ENCODE measurements at regions of chr1 and their contacts with region 1.

Region 1: GRCh38 chr1:165827268-165828102 is at the start of gene UCK2:
- DNase-seq: peak; percentile 89 to 92 (median 91)
- ATAC-seq: peak; percentile 88
- H3K4me3 ChIP-seq: peak within 1 kb of the TSS; percentile 78
- H3K27ac ChIP-seq: peak within 1 kb of the TSS; percentile 95
- H3K4me1 ChIP-seq: peaks cover 8 to 16% of the 10 kb centered on the region in 2 experiments
- H3K27me3 ChIP-seq: no peaks in the 10 kb centered on the region; a peak in 1 of 5 replicates
- CTCF ChIP-seq: peak; percentile 0 to 33 (median 26); a peak in 3 of 6 replicates
- EP300 ChIP-seq: no peak
- POLR2A ChIP-seq: peak; percentile 77
- RAD21 ChIP-seq: peak in 1 of 2 experiments; percentile 41
- polyA plus RNA-seq, gene UCK2: 84.6 to 86.7 TPM

Region 2: DNA sequence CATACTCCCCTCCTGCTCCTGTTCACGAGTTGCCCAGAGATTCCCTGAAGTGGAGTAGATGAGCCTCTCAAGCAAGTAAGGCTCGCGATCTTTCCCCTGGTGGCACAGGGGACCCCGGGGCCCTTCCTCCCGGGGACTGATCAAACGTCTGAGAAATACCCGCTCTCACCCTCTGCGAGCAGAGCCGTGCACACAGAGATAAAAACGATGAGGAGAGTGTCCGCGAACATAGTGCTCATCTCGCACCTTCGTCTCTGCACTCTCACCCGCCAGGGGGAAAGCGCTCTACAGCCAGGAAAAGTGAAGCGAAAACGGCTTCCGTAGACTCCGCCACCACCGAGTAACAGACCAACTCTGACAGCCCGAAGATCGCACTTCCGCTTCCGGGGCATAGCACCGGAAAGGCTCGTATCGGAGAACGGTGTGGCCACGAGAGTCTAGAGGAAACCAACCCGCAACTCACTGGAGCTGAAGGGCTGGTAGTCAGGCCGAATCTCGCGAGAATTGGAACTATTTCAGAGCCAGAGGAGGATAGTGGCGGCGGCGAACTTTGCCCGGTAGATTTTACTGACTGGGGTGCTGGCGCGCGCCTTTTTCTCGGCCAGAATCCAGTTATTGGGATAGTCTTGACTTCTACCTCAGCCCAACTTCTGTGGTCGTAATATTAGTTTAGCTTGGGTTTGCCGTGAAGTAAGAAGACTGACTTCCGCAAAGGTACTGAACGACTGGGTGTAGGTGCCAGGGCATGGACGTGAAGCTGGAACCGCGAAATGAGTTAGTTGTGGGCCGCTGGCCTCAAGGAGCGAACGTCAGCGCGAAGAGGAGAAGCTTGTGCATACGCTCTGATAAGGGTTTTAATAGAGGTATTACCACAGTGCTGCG is 58.7 kb before region 1 on chr1 and contains the start of gene TMCO1:
- CTCF ChIA-PET with region 1: interaction called, 5 read pairs
- POLR2A ChIA-PET with region 1: interaction called, 27 read pairs
- in situ Hi-C with region 1: no loop called
- intact Hi-C with region 1: loop called (anchors 2 kb)
- DNase-seq: peak; percentile 90 to 99 (median 95)
- ATAC-seq: peak; percentile 96
- H3K4me3 ChIP-seq: peak within 1 kb of the TSS; percentile 73
- H3K27ac ChIP-seq: peak within 1 kb of the TSS; percentile 96
- H3K4me1 ChIP-seq: peaks cover 21 to 44% of the 10 kb centered on the region in 2 experiments
- H3K27me3 ChIP-seq: no peaks in the 10 kb centered on the region
- CTCF ChIP-seq: peak; percentile 27 to 45 (median 35); a peak in 4 of 6 replicates
- EP300 ChIP-seq: peak; percentile 62
- POLR2A ChIP-seq: peak; percentile 98
- RAD21 ChIP-seq: peak in 1 of 2 experiments; percentile 24; a peak in 1 of 4 replicates
- polyA plus RNA-seq, gene TMCO1: 412 to 561 TPM

Region 3: DNA sequence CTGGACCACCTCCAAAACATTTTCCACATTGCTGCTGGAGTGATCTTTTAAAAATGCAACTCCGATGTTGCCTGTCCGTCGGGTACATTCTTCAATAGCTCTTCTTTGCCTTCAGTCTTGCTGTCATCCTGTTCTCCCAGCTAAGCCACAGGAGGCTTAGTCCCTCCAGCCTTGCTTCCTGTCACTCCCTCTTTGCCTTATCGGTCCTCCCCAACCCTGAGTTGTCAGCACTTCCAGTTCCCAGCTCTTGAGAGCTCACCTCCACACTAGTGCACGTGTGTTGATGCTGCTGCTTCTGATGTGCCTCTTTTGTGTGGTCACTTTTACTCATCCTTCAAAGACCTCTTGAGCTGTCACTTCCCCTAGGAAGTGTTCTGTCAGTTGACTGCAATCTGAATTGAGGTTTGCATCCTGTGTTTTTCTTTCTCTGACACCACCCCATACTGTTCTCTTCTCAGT is 15.2 kb after region 1 on chr1:
- CTCF ChIA-PET with region 1: no interaction called
- POLR2A ChIA-PET with region 1: interaction called, 41 read pairs
- in situ Hi-C with region 1: no loop called
- intact Hi-C with region 1: no loop called
- DNase-seq: peak; percentile 68 to 95 (median 78)
- ATAC-seq: peak; percentile 92
- H3K4me3 ChIP-seq: no peak overlapping the region
- H3K27ac ChIP-seq: peak overlapping the region; percentile 37
- H3K4me1 ChIP-seq: peaks cover 31 to 73% of the 10 kb centered on the region in 2 experiments
- H3K27me3 ChIP-seq: no peaks in the 10 kb centered on the region
- CTCF ChIP-seq: no peak
- EP300 ChIP-seq: peak; percentile 81
- POLR2A ChIP-seq: no peak
- RAD21 ChIP-seq: peak; percentile 13 to 32; a peak in 2 of 4 replicates

Region 4: DNA sequence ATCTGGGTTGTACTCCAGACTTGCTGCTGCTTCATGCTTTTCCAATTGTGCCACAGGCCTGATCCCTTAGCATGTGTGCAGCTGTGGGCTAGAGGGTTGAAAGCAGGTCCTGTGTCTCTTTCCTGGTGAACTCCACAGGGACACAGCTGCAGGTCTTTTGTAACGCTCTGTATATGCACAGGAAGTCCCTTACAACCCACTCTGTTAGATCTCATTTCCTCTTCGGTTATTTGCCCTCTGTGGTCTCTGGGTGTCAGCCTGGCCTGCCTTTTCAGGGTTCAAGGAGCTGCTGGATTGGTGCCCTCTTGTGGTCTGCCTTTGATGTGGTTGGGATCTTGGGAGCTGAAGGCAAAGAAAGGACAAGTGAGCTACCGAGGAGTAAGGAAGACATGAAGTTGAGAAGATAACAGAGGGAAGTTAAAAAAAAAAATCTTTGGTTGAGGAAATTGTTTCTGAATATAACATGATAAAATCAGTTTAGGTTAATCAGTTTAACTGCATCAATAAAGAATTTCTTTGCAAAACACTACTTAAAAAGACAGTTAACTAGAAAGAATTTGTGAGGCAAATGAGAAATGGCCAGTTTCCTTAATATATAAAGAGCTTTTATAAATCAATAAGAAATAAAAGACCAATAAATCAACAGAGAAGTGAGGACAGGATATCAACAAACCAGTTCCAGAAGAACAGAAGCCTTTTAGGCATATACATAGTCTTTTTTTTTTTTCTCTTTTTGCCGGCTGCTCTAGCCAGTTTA is 44.0 kb after region 1 on chr1:
- CTCF ChIA-PET with region 1: interaction called, 4 read pairs
- POLR2A ChIA-PET with region 1: no interaction called
- in situ Hi-C with region 1: no loop called
- intact Hi-C with region 1: loop called (anchors 1 kb)
- DNase-seq: peak; percentile 63 to 86 (median 66)
- ATAC-seq: peak; percentile 90
- H3K4me3 ChIP-seq: no peak overlapping the region
- H3K27ac ChIP-seq: peak overlapping the region; percentile 27; the same call in 1 of the 3 replicates
- H3K4me1 ChIP-seq: peaks cover 2 to 3% of the 10 kb centered on the region in 2 experiments; a peak in 2 of 5 replicates
- H3K27me3 ChIP-seq: no peaks in the 10 kb centered on the region
- CTCF ChIP-seq: peak; percentile 66 to 88 (median 73)
- EP300 ChIP-seq: no peak
- POLR2A ChIP-seq: no peak
- RAD21 ChIP-seq: peak; percentile 81 to 82

Region 5: DNA sequence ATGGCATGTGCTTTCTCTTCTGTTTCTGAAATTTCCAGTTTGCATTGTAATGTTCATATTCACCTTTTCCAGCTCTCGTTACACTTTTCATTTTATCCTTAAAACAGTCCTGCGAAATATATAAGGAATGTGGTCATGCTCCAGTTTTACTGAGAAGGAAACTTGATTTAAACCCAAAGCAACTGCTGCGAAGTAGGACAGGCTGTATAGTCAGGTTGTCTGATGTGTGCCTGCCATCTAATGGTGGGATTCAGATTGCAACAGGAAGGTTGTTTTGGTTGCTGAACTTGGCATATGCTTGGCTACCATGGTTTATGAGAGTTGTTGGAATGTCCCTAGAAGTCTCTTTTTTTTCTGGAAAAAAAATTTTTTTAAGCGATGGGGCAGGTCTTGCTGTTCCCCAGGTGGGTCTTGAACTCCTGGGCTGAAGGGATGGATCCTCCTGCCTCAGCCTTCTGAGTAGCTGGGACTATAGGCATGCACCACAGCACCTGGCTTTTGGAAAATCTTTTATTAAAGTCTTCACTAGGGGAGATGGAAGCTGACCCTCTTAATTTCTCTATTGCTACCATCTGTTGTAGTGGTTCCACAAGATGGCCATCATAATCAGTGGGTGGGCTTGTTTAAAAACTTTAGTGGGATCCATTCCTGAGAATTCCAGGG is 86.8 kb after region 1 on chr1:
- CTCF ChIA-PET with region 1: interaction called, 3 read pairs
- POLR2A ChIA-PET with region 1: no interaction called
- in situ Hi-C with region 1: no loop called
- intact Hi-C with region 1: loop called (anchors 2 kb)
- DNase-seq: peak; percentile 78 to 83 (median 80)
- ATAC-seq: peak; percentile 87
- H3K4me3 ChIP-seq: no peak overlapping the region
- H3K27ac ChIP-seq: no peak overlapping the region
- H3K4me1 ChIP-seq: no peaks in the 10 kb centered on the region
- H3K27me3 ChIP-seq: no peaks in the 10 kb centered on the region
- CTCF ChIP-seq: peak; percentile 92 to 98 (median 93)
- EP300 ChIP-seq: no peak
- POLR2A ChIP-seq: no peak
- RAD21 ChIP-seq: peak; percentile 99

Region 6: GRCh38 chr1:166029196-166029945 is 201.9 kb after region 1 on chr1:
- CTCF ChIA-PET with region 1: no interaction called
- POLR2A ChIA-PET with region 1: no interaction called
- in situ Hi-C with region 1: no loop called
- intact Hi-C with region 1: no loop called
- DNase-seq: no peak
- ATAC-seq: no peak
- H3K4me3 ChIP-seq: no peak overlapping the region
- H3K27ac ChIP-seq: no peak overlapping the region
- H3K4me1 ChIP-seq: no peaks in the 10 kb centered on the region
- H3K27me3 ChIP-seq: no peaks in the 10 kb centered on the region
- CTCF ChIP-seq: no peak
- EP300 ChIP-seq: no peak
- POLR2A ChIP-seq: no peak
- RAD21 ChIP-seq: no peak

Region 7: DNA sequence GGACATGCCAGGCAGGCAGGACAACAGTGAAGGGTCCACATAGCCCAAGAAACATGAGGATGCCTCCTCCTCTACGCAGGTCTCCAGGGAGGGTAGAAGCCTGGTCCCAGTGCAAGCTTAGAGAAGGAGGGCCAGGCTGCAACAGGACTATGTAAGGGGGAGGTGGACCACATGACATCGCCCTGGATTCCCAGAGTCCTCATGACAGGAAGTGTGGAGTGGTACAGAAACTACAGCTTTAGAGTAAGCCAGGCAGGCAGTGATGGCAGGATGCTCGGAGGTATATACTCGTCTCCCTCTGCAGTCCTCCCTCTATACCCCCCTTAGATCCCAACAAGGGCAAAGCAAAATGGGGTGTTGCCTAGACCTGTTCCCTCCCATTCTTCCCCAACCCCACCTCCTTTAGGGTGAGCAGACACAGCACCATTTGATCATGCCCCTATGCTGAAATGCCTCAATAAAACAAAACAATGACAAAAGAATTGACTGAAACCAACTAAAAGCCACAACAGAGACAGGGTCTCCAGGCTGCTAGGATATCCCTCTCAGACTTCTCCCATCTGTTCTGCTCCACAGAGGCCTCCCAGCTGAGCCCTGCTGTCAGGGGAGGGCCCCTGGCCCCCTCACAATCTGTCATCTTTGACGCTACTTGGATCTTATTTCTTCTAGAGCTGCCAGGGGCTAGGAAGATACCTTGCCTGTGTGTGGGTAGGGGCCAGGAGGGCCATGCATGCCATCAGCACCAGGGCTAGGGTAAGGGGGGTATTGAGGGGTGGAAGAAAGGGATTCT is 326.2 kb after region 1 on chr1:
- CTCF ChIA-PET with region 1: no interaction called
- POLR2A ChIA-PET with region 1: no interaction called
- in situ Hi-C with region 1: no loop called
- intact Hi-C with region 1: no loop called
- DNase-seq: no peak
- ATAC-seq: no peak
- H3K4me3 ChIP-seq: no peak overlapping the region
- H3K27ac ChIP-seq: no peak overlapping the region
- H3K4me1 ChIP-seq: no peaks in the 10 kb centered on the region
- H3K27me3 ChIP-seq: peaks cover 2 to 13% of the 10 kb centered on the region in 2 experiments; a peak in 3 of 5 replicates
- CTCF ChIP-seq: no peak
- EP300 ChIP-seq: no peak
- POLR2A ChIP-seq: no peak
- RAD21 ChIP-seq: no peak

Measured in K562 (cell line).